Activated T-helper 1 cell treated with anti-CD3 and anti-CD28 coated beads, Interleukin-12 subunit alpha, Interleukin-12 subunit beta, Interleukin-2, Interleukin-4 antibody, amounts not matched to agents 30 ng/mL and 10 ng/mL and 1 ng/mL, durations not matched to agents 14 hours and 24 hours and 36 hours (primary cell): ENCODE measurements at regions of chr18 and their contacts with region 1.

Region 1: DNA sequence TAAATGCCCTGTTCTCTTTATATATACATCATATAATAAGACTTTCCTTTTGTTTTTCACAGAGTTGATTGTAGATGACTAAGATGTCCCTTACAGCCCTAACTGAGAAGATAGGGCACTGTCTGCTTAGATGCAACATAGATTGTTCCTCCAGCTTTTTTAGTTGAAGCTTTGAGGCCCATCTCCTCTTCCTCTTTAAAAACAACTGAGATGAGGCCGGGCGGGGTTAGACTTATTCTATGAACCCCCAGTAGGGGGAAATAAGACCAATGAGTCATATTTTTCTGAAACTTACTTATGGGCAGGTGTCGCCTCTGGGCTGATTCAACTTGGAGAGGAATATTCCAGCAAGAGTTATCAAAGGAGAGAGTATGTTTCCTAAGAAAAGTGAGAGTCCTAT is 84.6 kb downstream of the FBXO15 start:
- DNase-seq: no peak
- H3K4me3 Mint-ChIP-seq: peak overlapping the region; percentile 19
- H3K27ac Mint-ChIP-seq: peak overlapping the region; percentile 77
- H3K4me1 Mint-ChIP-seq: peaks cover 50% of the 10 kb centered on the region
- H3K27me3 Mint-ChIP-seq: no peaks in the 10 kb centered on the region

Region 2: DNA sequence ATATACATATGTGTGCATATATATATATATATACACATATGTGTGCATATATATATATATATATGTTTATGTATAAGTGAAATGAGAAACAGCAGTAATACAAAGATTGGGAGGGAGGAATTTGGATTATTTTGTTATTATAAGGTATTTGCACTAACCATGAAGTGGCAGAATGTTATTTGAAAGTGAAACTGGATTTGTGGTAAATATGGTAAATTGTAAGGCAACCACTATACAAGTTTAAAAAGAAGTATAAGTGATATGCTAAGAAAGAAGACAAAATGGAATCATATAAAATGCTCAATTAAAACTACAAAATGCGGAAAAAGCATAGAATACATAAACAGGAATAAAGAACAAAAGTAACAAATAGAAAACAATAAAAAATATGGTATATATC is 47.1 kb after region 1 on chr18:
- intact Hi-C with region 1: loop called (anchors 2 kb)
- DNase-seq: no peak
- H3K4me3 Mint-ChIP-seq: no peak overlapping the region
- H3K27ac Mint-ChIP-seq: no peak overlapping the region
- H3K4me1 Mint-ChIP-seq: peaks cover 21% of the 10 kb centered on the region
- H3K27me3 Mint-ChIP-seq: peaks cover 2% of the 10 kb centered on the region

Region 3: GRCh38 chr18:74139888-74140287 is 76.9 kb after region 1 on chr18:
- intact Hi-C with region 1: loop called (anchors 1 kb)
- DNase-seq: no peak
- H3K4me3 Mint-ChIP-seq: peak overlapping the region; percentile 59
- H3K27ac Mint-ChIP-seq: peak overlapping the region; percentile 93
- H3K4me1 Mint-ChIP-seq: peaks cover 44% of the 10 kb centered on the region
- H3K27me3 Mint-ChIP-seq: peaks cover 5% of the 10 kb centered on the region

Region 4: DNA sequence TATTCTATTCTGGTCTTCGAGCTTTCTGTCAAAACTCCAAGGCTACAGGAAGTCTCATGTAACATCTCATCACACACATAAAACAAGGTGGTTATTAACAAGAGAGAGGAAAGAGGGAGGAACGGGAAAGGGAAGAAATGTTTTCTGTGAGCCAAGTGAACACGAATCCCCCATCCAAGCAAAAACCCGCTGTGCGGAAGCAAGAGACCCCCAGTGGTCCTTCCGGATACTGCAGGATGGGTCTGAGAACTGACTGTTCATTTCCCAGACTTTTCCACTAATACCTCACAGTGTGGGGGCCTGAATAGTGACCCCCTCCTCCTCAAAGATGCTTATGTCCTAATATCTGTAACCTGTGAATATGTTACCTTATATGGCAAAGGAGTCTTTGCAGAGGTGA is 413.1 kb after region 1 on chr18:
- intact Hi-C with region 1: no loop called
- DNase-seq: no peak
- H3K4me3 Mint-ChIP-seq: no peak overlapping the region
- H3K27ac Mint-ChIP-seq: no peak overlapping the region
- H3K4me1 Mint-ChIP-seq: peaks cover 6% of the 10 kb centered on the region
- H3K27me3 Mint-ChIP-seq: peaks cover 2% of the 10 kb centered on the region